ENCODE measurements at regions of chr17 and their contacts with region 1.

Region 1: DNA sequence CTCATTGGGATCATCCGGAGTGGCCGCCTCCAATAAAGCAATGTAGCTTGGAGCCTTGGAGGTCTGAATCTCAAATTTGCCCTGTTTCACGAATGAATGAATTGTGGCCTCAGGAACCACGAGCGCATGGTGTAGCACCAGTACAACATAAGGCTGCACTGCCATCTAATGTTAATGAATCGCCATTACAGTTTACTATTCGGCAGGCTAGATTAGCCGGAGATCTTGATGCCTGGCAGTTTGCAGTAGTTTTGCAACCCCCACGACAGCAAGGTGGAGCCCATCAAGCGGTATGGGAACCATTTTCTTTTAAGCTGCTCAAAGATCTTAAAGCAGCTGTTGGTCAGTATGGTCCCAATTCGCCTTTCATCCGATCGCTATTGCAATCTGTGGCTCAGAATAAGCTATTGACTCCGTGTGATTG is 18.8 kb downstream of the ALOX15B start:
- DNase-seq: no peak
- ATAC-seq: peak; percentile 80
- H3K4me3 Mint-ChIP-seq: no peak overlapping the region
- H3K27ac Mint-ChIP-seq: no peak overlapping the region
- H3K4me1 Mint-ChIP-seq: peaks cover 25% of the 10 kb centered on the region
- H3K27me3 Mint-ChIP-seq: peaks cover 19% of the 10 kb centered on the region
- CTCF ChIP-seq: no peak

Region 2: DNA sequence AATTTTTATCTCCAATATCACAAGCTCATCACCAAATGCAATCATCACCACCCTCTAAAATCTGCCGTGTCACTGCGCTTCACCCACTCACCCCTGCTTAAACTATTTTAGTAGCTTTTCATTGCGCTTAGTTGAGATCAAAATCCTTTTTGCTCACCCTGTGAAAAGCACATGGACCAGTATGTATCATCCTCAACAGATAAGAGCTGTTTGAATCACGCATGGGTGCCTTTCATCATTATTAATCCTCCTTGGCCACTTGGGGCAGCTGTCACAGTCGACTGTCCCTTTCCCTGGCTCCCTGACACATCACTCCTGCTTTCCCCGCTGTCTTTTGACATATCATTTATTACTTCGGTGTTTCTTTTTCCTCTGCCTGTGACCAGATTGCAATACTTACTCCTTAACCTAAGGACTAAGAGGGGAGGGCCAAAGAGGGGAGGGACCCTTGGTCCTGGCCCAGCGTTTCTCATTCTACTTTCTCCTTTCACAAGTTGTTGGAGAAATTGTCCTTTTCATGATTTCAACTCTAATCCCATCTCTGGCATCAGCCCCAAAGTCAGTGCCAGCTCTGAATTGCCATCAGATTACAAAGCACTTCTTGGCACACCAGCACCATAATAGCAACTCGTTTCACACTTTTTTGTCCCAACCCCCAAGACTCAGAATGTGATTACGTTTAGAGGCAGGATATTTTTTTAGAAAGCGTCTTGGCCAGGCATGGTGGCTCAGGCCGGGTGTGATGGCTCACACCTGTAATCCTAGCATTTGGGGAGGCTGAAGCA is 232.3 kb before region 1 on chr17:
- CTCF ChIA-PET with region 1: interaction called, 5 read pairs
- POLR2A ChIA-PET with region 1: no interaction called
- intact Hi-C with region 1: loop called (anchors 1 kb)
- DNase-seq: no peak
- ATAC-seq: no peak
- H3K4me3 Mint-ChIP-seq: no peak overlapping the region
- H3K27ac Mint-ChIP-seq: no peak overlapping the region
- H3K4me1 Mint-ChIP-seq: no peaks in the 10 kb centered on the region
- H3K27me3 Mint-ChIP-seq: peaks cover 18% of the 10 kb centered on the region
- CTCF ChIP-seq: no peak

Region 3: DNA sequence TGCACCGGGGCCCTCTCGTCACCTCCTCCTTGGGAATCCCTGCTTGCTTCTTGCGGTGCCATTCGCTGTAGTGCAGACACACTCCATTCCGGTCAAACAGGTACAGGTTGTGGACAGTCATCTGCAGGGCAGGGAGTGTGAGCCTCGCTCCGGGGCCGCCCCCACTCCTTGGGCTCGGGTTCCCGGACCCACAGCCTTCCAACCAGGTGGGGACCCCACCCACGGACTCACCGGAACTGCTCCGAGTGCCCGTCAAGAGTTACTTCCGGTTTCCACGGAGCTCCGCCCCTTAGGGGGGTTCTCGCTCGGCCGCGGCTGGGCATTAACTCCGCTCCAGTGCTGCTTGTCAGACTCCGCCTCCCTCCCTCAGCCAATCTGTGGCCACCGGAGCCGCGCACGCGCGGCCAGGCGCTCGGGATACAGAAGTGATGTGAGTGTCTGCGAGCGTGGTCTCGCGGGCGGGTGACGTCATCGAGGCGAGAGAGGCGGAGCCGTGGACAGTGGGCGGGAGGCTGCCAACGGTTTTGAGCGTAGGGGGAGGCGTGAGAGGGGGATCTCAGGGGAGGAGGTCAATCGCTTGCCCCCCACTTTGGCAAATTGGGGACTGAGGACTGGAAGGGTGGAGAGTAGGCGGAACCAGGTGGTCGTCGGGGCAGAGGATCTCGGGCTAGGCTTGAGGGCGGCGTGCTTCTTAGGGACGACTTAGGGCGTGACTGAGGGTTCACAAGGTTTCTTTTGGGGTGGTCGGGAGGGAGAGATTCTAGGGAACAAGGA is 125.8 kb before region 1 on chr17 and contains the starts of genes CNTROB and TRAPPC1:
- CTCF ChIA-PET with region 1: interaction called, 10 read pairs
- POLR2A ChIA-PET with region 1: no interaction called
- intact Hi-C with region 1: no loop called
- DNase-seq: peak; percentile 99
- ATAC-seq: peak; percentile 96
- H3K4me3 Mint-ChIP-seq: peak within 1 kb of the TSS; percentile 97
- H3K27ac Mint-ChIP-seq: peak within 1 kb of the TSS; percentile 92
- H3K4me1 Mint-ChIP-seq: peaks cover 48% of the 10 kb centered on the region
- H3K27me3 Mint-ChIP-seq: no peaks in the 10 kb centered on the region
- CTCF ChIP-seq: no peak
- total RNA-seq, gene CNTROB: 23.0 and 24.6 TPM in 2 replicates
- total RNA-seq, gene TRAPPC1: 129 and 167 TPM in 2 replicates

Region 4: GRCh38 chr17:8079291-8080207 is 21.8 kb after region 1 on chr17:
- CTCF ChIA-PET with region 1: interaction called, 52 read pairs
- POLR2A ChIA-PET with region 1: interaction called, 4 read pairs
- intact Hi-C with region 1: loop called (anchors 2 kb)
- DNase-seq: peak; percentile 82
- ATAC-seq: peak; percentile 85
- H3K4me3 Mint-ChIP-seq: peak overlapping the region; percentile 89
- H3K27ac Mint-ChIP-seq: peak overlapping the region; percentile 83
- H3K4me1 Mint-ChIP-seq: peaks cover 17% of the 10 kb centered on the region
- H3K27me3 Mint-ChIP-seq: peaks cover 13% of the 10 kb centered on the region
- CTCF ChIP-seq: no peak

Region 5: DNA sequence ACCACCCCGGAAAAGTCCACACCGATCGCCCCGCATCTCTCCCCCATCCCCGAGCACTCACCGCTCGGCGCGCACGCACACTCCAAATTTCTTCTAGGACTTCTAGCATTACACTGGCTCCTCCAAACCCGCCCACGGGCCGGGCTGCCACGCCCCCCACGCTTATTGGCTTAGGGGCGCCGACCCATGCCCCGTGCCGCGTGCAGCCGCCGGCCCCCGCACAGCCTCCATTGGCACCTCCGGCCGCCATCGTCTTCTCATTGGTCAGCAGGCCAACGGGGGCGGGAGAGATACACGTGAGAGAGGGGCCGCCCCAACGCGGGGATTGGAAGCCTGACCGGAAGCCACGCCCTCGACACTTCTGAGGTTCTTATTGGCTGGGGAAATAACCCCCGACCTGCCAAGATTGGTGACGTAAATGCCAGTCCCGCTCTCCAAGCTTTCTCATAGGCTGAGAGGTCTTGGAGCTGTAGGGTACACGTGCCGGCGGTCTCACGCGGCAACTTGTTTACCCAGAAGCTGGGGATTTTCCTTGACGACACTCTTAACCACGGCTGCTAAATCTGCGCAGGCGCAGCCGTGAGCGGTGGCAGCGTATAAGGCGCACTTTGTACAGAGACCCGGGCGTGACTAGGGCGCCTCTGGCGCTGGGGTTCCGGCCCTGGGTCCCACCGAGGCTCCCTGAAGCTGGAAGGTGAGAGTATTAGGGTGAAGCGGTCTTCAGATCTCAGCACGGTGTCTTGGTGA is 98.7 kb after region 1 on chr17:
- CTCF ChIA-PET with region 1: interaction called, 15 read pairs
- POLR2A ChIA-PET with region 1: no interaction called
- intact Hi-C with region 1: loop called (anchors 1 kb)
- DNase-seq: peak; percentile 98
- ATAC-seq: peak; percentile 82
- H3K4me3 Mint-ChIP-seq: no peak overlapping the region
- H3K27ac Mint-ChIP-seq: no peak overlapping the region
- H3K4me1 Mint-ChIP-seq: peaks cover 48% of the 10 kb centered on the region
- H3K27me3 Mint-ChIP-seq: no peaks in the 10 kb centered on the region
- CTCF ChIP-seq: no peak

Region 6: GRCh38 chr17:8383143-8383822 is 325.6 kb after region 1 on chr17 and contains the start of gene RPL26:
- CTCF ChIA-PET with region 1: interaction called, 3 read pairs
- POLR2A ChIA-PET with region 1: no interaction called
- intact Hi-C with region 1: loop called (anchors 5 kb)
- DNase-seq: peak; percentile 94
- ATAC-seq: peak; percentile 90
- H3K4me3 Mint-ChIP-seq: peak within 1 kb of the TSS; percentile 98
- H3K27ac Mint-ChIP-seq: peak within 1 kb of the TSS; percentile 95
- H3K4me1 Mint-ChIP-seq: peaks cover 56% of the 10 kb centered on the region
- H3K27me3 Mint-ChIP-seq: no peaks in the 10 kb centered on the region
- CTCF ChIP-seq: peak; percentile 87
- total RNA-seq, gene RPL26: 3,512 and 4,174 TPM in 2 replicates

Region 7: GRCh38 chr17:8997994-8998628 is 940.4 kb after region 1 on chr17:
- CTCF ChIA-PET with region 1: interaction called, 11 read pairs
- POLR2A ChIA-PET with region 1: no interaction called
- intact Hi-C with region 1: loop called (anchors 5 kb)
- DNase-seq: peak; percentile 72
- ATAC-seq: peak; percentile 74
- H3K4me3 Mint-ChIP-seq: no peak overlapping the region
- H3K27ac Mint-ChIP-seq: no peak overlapping the region
- H3K4me1 Mint-ChIP-seq: peaks cover 22% of the 10 kb centered on the region
- H3K27me3 Mint-ChIP-seq: peaks cover 10% of the 10 kb centered on the region
- CTCF ChIP-seq: peak; percentile 73